Left ventricle myocardium superior (tissue), 1 donor: ENCODE measurements at regions of chr11 and their contacts with region 1.

Region 1: GRCh38 chr11:78416305-78417178 is 1.1 kb downstream of the GAB2 start:
- DNase-seq: peak; percentile 86
- ATAC-seq: peak; percentile 74

Region 2: GRCh38 chr11:78228467-78228866 is 188.1 kb before region 1 on chr11:
- intact Hi-C with region 1: loop called (anchors 10 kb)
- DNase-seq: no peak
- ATAC-seq: peak; percentile 60

Region 3: DNA sequence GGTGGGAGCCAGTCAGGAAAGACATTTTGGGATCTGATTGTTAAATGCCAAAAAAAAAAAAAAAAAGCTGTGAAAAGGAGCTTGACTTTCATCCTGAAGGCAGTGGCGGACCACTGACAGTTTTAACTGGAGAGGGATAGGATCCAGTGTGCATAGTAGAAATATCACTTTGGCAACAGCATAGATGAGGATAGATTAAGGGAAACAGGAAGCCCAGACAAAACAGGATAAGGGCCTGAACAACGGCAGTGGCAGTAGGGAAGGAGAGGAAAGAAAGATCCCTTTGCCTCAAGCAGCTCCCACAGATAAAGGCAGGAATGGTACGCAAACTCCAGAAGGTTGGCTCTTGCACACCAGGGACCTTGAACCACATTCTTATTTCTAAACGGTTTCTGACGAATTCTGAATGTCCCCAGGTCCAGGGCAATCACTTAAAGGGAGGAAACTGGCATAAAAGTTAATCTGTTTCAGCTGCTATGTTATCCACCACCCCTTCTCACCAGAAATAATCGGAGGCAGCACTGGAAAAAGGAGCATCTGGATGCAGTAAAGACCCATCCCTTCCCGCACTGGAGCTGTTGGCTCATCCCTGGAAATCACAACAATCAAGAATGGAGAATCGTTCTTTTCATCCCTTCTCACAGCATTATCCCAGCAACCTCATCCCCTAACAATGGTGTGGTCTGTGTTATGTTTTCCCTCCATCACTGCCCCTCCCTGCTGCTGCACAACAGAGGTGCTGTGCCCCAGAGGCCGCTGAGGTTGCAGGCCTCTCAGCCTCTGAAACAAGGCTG is 98.0 kb before region 1 on chr11:
- intact Hi-C with region 1: loop called (anchors 5 kb)
- DNase-seq: no peak
- ATAC-seq: peak; percentile 31

Region 4: DNA sequence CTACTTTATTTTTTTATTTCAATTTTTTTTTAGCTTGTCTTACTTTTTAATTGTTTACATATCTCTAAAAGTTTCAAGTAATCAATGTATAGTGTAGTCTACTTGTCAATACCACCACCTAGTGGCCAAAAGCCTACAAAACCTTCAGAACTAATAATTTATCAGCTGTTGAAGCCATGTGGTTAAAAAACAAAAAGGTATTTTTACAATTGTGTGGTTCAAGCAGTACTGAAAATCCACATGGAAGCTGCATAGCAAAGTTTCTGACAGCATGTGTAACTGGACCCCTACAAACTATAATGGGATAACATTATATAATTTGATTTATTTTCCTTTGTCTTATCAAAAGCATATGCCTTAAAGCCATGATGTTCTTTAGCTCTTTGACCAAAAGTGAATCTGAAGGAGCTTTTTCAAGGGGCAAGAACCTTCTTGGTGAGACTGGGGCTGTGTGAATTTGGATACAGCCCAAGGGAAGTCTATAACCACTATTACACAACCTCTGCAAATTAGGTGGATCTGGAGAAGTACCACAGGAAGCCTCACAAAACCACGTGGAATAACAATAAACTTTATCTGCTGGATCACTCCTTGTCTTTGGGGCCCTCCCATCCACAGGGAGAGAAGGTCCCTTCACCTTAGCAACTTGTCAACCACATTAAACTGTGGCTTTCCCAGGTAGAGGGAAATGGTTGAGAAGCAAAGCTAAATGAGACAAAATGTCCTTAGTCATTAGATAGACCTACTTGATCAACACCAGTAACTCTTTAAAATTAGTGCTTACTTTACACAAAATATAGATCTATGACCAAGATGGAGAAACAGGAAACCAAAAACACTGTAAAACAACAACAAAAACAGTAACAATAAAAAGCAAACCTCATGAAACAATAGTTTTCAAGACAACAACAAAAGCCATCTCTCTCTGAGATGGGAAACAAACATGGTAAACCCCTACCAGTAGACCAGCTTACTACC is 148.2 kb after region 1 on chr11:
- intact Hi-C with region 1: loop called (anchors 10 kb)
- DNase-seq: no peak
- ATAC-seq: peak; percentile 51